Endothelial cell of umbilical vein (primary cell): ENCODE measurements at regions of chr2 and their contacts with region 1.

Region 1: DNA sequence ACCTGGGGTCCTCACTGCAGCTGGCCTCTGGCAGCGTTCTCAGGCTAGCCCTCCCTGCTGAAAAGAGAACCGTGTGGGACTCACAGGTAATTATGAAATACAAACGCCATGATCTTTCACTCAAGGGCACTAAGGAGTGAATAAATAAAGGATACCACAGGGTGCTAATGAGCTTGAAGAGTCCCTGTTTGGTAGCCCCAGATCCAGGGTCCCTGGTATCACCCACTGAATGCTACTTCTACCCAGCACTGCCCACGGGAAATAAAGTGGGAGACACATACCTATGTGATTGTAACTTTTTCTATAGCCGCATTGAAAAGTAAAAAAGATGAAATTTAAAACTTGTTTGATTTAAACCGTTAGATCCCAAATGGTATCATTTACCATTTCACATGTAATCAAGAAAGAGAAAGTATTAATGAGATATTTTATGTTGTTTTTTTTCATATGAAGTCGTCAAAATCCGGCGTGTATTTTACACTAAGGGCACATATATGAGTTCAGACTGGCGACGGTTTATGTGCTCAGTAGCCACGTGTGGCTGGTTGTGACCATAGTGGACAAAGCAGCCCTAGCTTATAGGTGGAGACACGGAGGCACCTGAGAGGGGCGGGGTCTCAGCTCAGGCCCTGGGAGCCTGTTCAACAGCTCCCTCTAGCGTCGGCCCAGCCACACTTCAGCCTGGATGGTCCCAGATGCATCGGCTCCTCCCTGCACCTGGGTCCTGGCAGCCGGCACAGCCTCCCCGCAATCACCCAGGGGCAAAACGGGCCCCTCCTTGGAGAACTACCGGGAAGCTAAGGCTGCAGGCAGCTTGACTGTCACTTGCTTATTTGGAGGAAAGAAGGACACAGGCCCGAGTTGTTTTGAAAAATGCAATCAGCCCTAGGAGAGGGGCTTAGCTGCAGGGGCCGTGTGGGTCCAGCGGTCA is 39.2 kb downstream of the ODC1 start:
- DNase-seq: peak; percentile 75
- H3K4me3 ChIP-seq: no peak overlapping the region
- H3K27ac ChIP-seq: peak overlapping the region; percentile 74
- H3K4me1 ChIP-seq: peaks cover 52% of the 10 kb centered on the region
- H3K27me3 ChIP-seq: no peaks in the 10 kb centered on the region
- CTCF ChIP-seq: peak; percentile 94 to 96
- POLR2A ChIP-seq: no peak

Region 2: DNA sequence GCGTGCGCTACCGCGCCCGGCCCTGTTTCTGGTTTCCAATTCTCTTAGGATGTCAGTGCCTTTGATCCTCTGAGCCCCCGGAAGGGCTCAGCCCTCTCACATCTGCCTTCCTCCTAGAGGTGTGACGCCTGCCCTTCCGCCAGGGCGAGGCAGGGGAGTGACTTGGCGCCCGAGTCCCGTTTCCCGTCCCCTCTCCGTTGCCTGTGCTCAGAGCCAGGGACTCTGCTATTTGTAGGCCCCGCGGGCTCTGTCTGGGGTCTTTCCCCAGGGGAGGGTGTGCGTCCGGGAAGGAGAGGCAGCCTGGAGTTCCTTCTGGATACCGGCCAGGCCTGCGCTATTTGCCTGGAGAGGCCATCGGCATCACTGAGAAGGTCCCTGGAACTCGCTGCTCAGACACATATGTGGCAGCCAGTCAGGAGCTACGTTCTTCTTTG is 669.4 kb before region 1 on chr2:
- CTCF ChIA-PET with region 1: no interaction called
- POLR2A ChIA-PET with region 1: no interaction called
- dilution Hi-C with region 1: no loop called
- intact Hi-C with region 1: no loop called
- DNase-seq: no peak
- H3K4me3 ChIP-seq: peak overlapping the region in 1 of 3 experiments; percentile 21
- H3K27ac ChIP-seq: no peak overlapping the region
- H3K4me1 ChIP-seq: peaks cover 2% of the 10 kb centered on the region
- H3K27me3 ChIP-seq: peaks cover 4 to 6% of the 10 kb centered on the region in 2 experiments
- CTCF ChIP-seq: no peak
- POLR2A ChIP-seq: no peak

Region 3: GRCh38 chr2:10141736-10142642 is 266.9 kb before region 1 on chr2:
- CTCF ChIA-PET with region 1: interaction called, 79 read pairs
- POLR2A ChIA-PET with region 1: no interaction called
- dilution Hi-C with region 1: no loop called
- intact Hi-C with region 1: loop called (anchors 1 kb)
- DNase-seq: no peak
- H3K4me3 ChIP-seq: no peak overlapping the region
- H3K27ac ChIP-seq: no peak overlapping the region
- H3K4me1 ChIP-seq: no peaks in the 10 kb centered on the region
- H3K27me3 ChIP-seq: no peaks in the 10 kb centered on the region
- CTCF ChIP-seq: peak; percentile 50 to 65
- POLR2A ChIP-seq: no peak

Region 4: DNA sequence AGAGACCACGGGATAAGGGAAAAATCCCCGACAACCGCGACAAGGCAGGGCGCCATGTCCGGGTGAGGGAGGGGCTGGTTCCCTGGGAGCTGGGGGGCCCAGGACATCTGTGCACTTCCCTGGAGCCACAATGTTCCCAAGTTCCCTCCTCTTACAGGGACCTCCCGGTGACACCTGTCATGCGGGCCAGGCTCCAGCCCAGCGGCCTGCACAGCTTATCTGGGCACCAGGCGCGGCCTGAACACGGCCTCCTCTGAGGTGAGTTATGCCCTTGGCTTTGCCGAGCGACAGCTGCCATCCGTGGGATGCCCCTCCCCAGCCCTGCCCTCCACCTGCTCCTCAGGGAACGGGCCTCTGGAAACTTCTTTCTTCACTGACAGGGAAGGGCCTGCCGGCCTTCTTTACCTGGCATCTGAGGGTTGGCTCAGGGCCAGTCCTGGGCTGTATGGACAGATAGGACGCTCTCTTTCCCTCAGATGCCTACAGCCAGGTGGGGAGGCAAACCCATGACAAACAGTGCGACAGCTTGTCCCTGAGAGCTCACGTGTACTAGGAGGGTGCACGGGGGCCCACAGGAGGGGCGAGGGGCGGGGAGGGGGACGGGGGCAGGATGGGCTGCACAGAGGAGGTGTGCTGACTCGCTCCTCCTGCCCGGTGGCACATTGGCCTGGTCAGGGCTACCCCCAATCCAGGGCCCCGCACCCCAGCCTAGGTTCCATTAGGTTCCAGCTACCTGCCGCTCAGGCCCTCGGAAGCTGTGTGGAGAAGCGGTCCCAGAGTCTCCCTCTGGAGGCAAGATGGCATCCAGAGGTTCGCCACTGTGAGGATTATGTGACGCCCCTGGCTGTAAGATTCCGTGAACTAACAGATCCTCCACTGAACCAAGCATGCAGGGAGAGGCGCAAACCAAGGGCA is 141.1 kb before region 1 on chr2:
- CTCF ChIA-PET with region 1: interaction called, 46 read pairs
- POLR2A ChIA-PET with region 1: no interaction called
- dilution Hi-C with region 1: no loop called
- intact Hi-C with region 1: loop called (anchors 1 kb)
- DNase-seq: no peak
- H3K4me3 ChIP-seq: no peak overlapping the region
- H3K27ac ChIP-seq: no peak overlapping the region
- H3K4me1 ChIP-seq: peaks cover 3% of the 10 kb centered on the region
- H3K27me3 ChIP-seq: no peaks in the 10 kb centered on the region
- CTCF ChIP-seq: no peak
- POLR2A ChIP-seq: no peak

Region 5: GRCh38 chr2:10331027-10331701 is 77.8 kb before region 1 on chr2:
- CTCF ChIA-PET with region 1: interaction called, 38 read pairs
- POLR2A ChIA-PET with region 1: no interaction called
- dilution Hi-C with region 1: no loop called
- intact Hi-C with region 1: loop called (anchors 1 kb)
- DNase-seq: peak; percentile 49
- H3K4me3 ChIP-seq: peak overlapping the region in 1 of 3 experiments; percentile 20
- H3K27ac ChIP-seq: peak overlapping the region; percentile 88
- H3K4me1 ChIP-seq: peaks cover 51% of the 10 kb centered on the region
- H3K27me3 ChIP-seq: no peaks in the 10 kb centered on the region
- CTCF ChIP-seq: peak in 1 of 2 donors; percentile 9
- POLR2A ChIP-seq: no peak

Region 6: GRCh38 chr2:10382354-10383061 is 26.4 kb before region 1 on chr2:
- CTCF ChIA-PET with region 1: interaction called, 42 read pairs
- POLR2A ChIA-PET with region 1: interaction called, 3 read pairs
- dilution Hi-C with region 1: no loop called
- intact Hi-C with region 1: no loop called
- DNase-seq: peak; percentile 70
- H3K4me3 ChIP-seq: no peak overlapping the region
- H3K27ac ChIP-seq: no peak overlapping the region
- H3K4me1 ChIP-seq: peaks cover 22% of the 10 kb centered on the region
- H3K27me3 ChIP-seq: no peaks in the 10 kb centered on the region
- CTCF ChIP-seq: no peak
- POLR2A ChIP-seq: no peak

Region 7: DNA sequence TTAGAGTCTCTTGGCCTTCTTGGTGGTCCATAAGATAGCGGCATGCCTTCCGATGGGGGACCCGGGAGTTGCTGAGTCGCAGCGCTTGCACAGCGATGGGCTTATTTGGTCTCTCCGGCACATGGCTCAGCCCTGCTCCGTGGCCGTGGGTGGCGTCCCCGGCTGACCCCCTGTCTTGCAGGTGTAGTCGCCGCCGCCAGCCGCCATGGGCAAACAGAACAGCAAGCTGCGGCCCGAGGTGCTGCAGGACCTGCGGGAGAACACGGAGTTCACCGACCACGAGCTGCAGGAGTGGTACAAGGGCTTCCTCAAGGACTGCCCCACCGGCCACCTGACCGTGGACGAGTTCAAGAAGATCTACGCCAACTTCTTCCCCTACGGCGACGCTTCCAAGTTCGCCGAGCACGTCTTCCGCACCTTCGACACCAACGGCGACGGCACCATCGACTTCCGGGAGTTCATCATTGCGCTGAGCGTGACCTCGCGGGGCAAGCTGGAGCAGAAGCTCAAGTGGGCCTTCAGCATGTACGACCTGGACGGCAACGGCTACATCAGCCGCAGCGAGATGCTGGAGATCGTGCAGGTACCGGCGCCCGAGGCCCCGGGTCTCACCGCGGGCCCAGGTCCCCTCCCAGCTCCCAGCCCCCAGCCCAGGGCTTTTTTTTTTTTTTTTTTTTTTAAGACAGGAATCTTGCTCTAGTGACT is 10.8 kb after region 1 on chr2:
- CTCF ChIA-PET with region 1: interaction called, 10 read pairs
- POLR2A ChIA-PET with region 1: no interaction called
- dilution Hi-C with region 1: no loop called
- intact Hi-C with region 1: no loop called
- DNase-seq: no peak
- H3K4me3 ChIP-seq: no peak overlapping the region
- H3K27ac ChIP-seq: no peak overlapping the region
- H3K4me1 ChIP-seq: no peaks in the 10 kb centered on the region
- H3K27me3 ChIP-seq: no peaks in the 10 kb centered on the region
- CTCF ChIP-seq: no peak
- POLR2A ChIP-seq: no peak